PC-9 (cell line): ENCODE measurements at regions of chr3 and their contacts with region 1.

Region 1: GRCh38 chr3:98732286-98733052 is 30.7 kb upstream of the ST3GAL6 start:
- DNase-seq: peak; percentile 50 to 64
- H3K4me3 ChIP-seq: peak overlapping the region; percentile 73
- H3K27ac ChIP-seq: no peak overlapping the region
- H3K4me1 ChIP-seq: peaks cover 27% of the 10 kb centered on the region
- H3K27me3 ChIP-seq: no peaks in the 10 kb centered on the region
- CTCF ChIP-seq: no peak

Region 2: GRCh38 chr3:98593046-98593936 is 139.2 kb before region 1 on chr3 and contains the start of gene CPOX:
- CTCF ChIA-PET with region 1: no interaction called
- POLR2A ChIA-PET with region 1: no interaction called
- intact Hi-C with region 1: loop called (anchors 5 kb)
- DNase-seq: peak; percentile 88 to 94
- H3K4me3 ChIP-seq: peak within 1 kb of the TSS; percentile 66
- H3K27ac ChIP-seq: peak within 1 kb of the TSS; percentile 23
- H3K4me1 ChIP-seq: peaks cover 12% of the 10 kb centered on the region
- H3K27me3 ChIP-seq: no peaks in the 10 kb centered on the region
- CTCF ChIP-seq: no peak; the same call in 1 of the 2 replicates
- total RNA-seq, gene CPOX: 30.4 and 35.2 TPM in 2 replicates

Region 3: GRCh38 chr3:98784666-98785600 is 52.5 kb after region 1 on chr3:
- CTCF ChIA-PET with region 1: no interaction called
- POLR2A ChIA-PET with region 1: no interaction called
- intact Hi-C with region 1: loop called (anchors 2 kb)
- DNase-seq: peak in 1 of 2 experiments; percentile 62
- H3K4me3 ChIP-seq: no peak overlapping the region
- H3K27ac ChIP-seq: no peak overlapping the region
- H3K4me1 ChIP-seq: 0 out of 2 replicates have a peak, but pooled peaks cover 7% of the 10 kb centered on the region
- H3K27me3 ChIP-seq: no peaks in the 10 kb centered on the region
- CTCF ChIP-seq: no peak